ENCODE measurements at regions of chr1 and their contacts with region 1.

Region 1: DNA sequence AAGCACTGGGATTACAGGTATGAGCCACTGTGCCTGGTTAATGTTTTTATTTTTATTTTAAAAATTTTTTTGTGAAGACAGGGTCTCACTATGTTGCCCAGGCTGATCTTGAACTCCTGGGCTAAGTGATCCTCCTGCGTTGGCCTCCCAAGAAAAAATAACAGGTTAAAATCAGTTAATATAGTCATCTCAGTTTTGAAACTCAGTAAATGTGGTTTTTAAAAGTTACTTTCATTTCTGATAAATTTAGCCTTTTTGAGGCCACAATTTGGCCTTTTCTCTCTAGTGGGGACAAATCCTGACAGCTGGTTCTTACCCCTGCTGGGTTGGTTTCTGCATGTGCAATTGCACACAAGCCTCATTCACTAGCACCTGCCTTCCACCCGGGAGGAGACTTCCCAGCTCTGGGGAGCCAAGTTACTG is 13.3 kb downstream of the PMF1 start:
- DNase-seq: no peak
- H3K4me3 ChIP-seq: no peak overlapping the region
- H3K27ac ChIP-seq: no peak overlapping the region
- H3K4me1 ChIP-seq: no peaks in the 10 kb centered on the region
- H3K27me3 ChIP-seq: no peaks in the 10 kb centered on the region
- CTCF ChIP-seq: no peak

Region 2: DNA sequence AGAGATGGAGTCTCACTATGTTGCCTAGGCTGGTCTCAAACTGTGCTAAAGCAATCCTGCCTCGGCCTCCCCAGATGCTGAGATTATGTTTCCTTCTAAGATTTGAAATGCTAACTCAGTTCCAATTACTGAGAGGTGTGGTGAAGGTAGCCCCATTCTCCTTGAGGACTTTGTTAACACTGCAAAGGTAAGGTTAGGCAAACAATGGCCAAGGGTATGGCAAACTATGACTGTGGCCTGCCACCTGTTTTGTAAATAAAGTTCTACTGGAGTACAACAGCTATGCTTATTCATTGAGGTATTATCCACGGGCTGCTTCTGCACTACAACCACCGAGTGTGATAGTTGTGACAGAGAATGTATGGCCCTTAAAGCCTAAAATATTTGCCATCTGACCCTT is 305.4 kb before region 1 on chr1:
- intact Hi-C with region 1: no loop called
- DNase-seq: no peak
- H3K4me3 ChIP-seq: no peak overlapping the region
- H3K27ac ChIP-seq: no peak overlapping the region
- H3K4me1 ChIP-seq: no peaks in the 10 kb centered on the region
- H3K27me3 ChIP-seq: no peaks in the 10 kb centered on the region
- CTCF ChIP-seq: no peak

Region 3: GRCh38 chr1:156090822-156091188 is 135.3 kb before region 1 on chr1:
- intact Hi-C with region 1: loop called (anchors 1 kb)
- DNase-seq: peak; percentile 74 to 86
- H3K4me3 ChIP-seq: no peak overlapping the region
- H3K27ac ChIP-seq: no peak overlapping the region
- H3K4me1 ChIP-seq: peaks cover 0 to 10% (median 2%) of the 10 kb centered on the region in 4 donors
- H3K27me3 ChIP-seq: no peaks in the 10 kb centered on the region
- CTCF ChIP-seq: peak; percentile 89 to 94

Region 4: DNA sequence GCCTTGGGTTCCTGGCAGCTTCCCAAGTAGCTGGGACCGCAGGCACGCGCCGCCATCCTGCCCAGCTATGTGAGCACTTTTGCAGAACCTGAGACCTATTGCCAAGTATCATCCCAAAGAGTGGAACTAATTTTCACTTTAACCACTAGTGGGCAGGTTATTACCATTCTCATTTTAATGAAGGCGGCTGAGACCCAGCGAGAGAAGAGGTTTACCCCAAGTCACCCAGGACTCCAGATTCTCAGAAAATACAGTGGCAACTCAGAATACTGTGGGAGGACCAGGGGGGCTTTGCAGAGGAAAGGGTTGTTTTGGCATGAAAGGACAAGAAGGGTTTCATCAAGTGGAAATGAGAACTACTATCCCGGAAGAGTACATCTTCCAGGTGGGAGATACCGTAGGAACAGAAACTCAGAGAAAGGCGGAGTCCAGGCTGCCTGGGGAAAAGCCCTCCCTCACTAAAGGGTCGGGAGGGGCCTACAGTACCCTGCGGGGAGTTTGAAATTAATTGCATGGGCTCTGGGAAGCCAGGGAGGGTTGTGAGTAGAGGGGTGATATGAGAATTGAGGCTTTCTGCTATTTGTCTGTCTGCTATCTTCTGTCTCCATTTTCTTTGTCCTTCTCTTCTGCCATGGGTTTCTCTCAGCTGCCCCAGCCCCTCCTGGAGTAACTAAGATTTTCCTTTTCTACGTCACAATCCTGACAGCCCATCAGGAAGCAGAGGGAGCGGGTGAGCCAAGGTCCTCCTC is 79.9 kb before region 1 on chr1:
- intact Hi-C with region 1: loop called (anchors 5 kb)
- DNase-seq: peak; percentile 76 to 85
- H3K4me3 ChIP-seq: no peak overlapping the region
- H3K27ac ChIP-seq: peak overlapping the region; percentile 31 to 33
- H3K4me1 ChIP-seq: peaks cover 0 to 69% (median 27%) of the 10 kb centered on the region in 4 donors
- H3K27me3 ChIP-seq: peaks cover 0 to 9% of the 10 kb centered on the region in 2 donors
- CTCF ChIP-seq: peak; percentile 61 to 70

Measured in tibial artery (tissue), 4 donors.